ENCODE measurements at regions of chr12 and their contacts with region 1.

Region 1: DNA sequence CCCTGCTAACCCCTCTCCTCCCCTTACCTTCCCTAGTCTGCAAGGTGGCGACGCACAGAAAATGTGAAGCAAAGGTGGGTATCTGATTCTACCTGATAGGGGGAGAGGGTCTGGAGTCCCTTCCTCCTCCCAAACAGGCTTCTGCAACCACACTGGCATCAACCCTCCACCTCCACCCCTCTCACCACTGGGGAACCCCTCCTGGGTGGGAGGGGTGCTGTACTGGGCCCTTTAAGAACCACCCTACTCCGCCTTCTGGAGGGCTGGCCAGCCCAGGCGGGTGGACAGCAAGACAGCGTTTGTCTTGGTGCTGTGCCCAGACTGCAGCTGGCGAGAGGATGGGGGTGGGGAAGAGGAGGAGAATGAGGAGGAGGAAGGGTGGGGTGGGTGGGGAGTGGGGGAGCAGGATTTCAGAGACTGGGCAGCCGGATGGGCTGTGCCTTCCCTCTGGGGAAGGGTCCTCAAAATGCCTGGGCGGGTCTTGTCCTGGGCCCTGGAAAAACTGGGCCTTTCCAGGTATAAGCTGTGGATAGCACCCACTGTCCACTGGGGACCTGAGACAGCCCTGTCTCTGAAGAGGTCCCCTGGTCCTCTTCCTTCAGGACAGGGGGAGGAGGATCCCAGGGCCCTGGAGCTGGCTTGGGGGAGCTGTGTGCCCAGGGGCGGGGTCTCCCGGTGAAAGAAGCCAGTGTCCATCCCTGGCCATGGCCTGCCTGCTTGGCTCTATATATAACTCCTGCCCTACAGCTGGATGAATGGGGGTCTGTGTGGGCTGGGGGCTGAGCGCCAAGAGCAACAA is 2.8 kb downstream of the TNS2 start:
- DNase-seq: peak; percentile 36
- H3K4me3 Mint-ChIP-seq: peak overlapping the region; percentile 96
- H3K27ac Mint-ChIP-seq: no peak overlapping the region
- H3K4me1 Mint-ChIP-seq: peaks cover 15% of the 10 kb centered on the region
- H3K27me3 Mint-ChIP-seq: peaks cover 11% of the 10 kb centered on the region
- CTCF ChIP-seq: no peak

Region 2: GRCh38 chr12:53031617-53032016 is 21.0 kb before region 1 on chr12:
- CTCF ChIA-PET with region 1: interaction called, 10 read pairs
- intact Hi-C with region 1: no loop called
- DNase-seq: no peak
- H3K4me3 Mint-ChIP-seq: no peak overlapping the region
- H3K27ac Mint-ChIP-seq: no peak overlapping the region
- H3K4me1 Mint-ChIP-seq: no peaks in the 10 kb centered on the region
- H3K27me3 Mint-ChIP-seq: no peaks in the 10 kb centered on the region
- CTCF ChIP-seq: no peak

Measured in Calu3 (cell line).